ENCODE measurements at regions of chr3 and their contacts with region 1.

Region 1: DNA sequence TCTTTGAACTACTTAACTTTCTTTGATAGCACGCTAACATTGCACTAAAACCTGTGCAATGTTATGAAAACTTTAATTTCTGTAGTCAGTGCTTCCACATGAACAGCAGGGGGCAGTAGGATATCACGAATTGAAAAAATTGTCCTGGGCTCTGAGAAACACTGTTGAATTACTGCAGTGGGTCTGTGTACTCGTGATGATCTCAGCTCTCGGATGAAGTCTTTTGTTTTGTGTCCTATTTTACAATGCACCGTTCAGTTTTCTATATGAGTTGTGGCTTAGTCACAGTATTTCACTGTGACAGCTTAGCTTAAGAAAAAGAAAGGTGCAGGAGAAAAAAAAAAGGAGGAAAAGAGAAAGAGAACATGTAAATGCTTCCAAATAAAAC is 141.3 kb upstream of the CCDC54 start:
- DNase-seq: no peak

Region 2: GRCh38 chr3:106850437-106850836 is 385.5 kb before region 1 on chr3:
- intact Hi-C with region 1: no loop called
- DNase-seq: no peak

Region 3: DNA sequence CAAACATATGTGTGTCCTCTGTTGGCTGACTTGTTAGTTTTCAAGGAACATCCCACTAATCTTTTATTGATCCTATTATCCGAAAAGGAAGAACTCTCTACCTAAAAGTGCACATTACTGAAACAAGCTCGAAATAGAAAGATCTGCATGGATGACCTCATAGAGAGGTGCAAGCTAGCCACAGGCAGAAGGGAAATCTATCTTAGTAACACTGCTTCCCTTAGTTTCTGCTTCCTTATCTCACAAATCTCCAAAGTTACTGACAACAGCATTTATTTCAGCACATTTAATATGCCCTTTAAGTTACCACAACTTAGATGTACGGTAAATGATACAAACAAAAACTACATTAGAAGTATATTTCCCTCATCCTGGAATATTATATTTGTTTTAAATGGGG is 143.8 kb before region 1 on chr3:
- intact Hi-C with region 1: no loop called
- DNase-seq: no peak

Region 4: GRCh38 chr3:107206141-107206540 is 29.8 kb before region 1 on chr3:
- intact Hi-C with region 1: loop called (anchors 2 kb)
- DNase-seq: no peak

Region 5: DNA sequence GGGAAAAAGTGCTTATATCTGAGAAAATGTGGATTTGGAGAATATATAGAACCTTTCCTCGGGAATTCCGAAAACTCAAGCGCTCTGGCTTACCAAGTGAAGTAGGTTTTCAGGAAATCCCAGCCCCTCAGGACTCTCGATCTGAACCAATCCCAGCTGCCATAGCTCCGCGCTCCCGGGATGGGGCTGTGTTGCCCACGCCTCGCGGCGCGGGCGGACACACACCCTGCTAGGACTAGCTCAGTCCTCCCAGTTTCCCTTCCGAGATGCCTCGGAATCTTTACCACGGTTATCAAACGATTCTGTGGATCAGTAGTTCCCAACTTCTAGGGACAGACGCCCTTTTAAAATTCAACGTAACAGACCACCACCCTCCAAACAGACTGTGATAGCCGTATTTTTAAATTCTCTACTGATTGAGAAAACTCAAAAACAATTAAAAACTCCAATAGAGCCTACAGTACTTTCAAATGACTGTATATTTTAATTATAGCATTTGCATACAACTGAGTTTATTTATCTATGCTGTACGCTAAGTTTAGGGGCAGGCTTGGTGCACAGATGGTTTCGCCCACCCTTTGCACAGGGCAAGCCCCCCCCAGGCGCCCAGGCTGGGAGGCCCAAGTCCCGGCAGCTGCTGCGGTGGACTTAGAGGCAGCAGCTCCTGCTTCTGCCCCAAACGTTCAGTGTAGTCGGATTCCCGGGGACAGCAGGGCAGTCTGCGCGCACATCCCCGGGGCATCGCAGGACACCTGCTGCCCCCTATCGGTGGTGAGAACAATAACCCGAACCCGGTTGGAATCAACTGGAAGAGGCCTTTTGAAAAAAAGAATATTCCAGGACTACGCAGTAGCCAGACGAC is 193.6 kb after region 1 on chr3:
- intact Hi-C with region 1: loop called (anchors 10 kb)
- DNase-seq: peak; percentile 88

Region 6: GRCh38 chr3:107523539-107524325 is 287.8 kb after region 1 on chr3:
- intact Hi-C with region 1: loop called (anchors 2 kb)
- DNase-seq: peak; percentile 82

Region 7: GRCh38 chr3:107543666-107544065 is 307.7 kb after region 1 on chr3:
- intact Hi-C with region 1: loop called (anchors 5 kb)
- DNase-seq: no peak

Region 8: GRCh38 chr3:107660306-107660976 is 424.5 kb after region 1 on chr3:
- intact Hi-C with region 1: loop called (anchors 10 kb)
- DNase-seq: no peak

Region 9: GRCh38 chr3:107740992-107741896 is 505.3 kb after region 1 on chr3:
- intact Hi-C with region 1: loop called (anchors 5 kb)
- DNase-seq: no peak